Activated CD4-positive, alpha-beta T cell treated with anti-CD3 and anti-CD28 coated beads for 36 hours (primary cell): ENCODE measurements at regions of chr5 and their contacts with region 1.

Region 1: DNA sequence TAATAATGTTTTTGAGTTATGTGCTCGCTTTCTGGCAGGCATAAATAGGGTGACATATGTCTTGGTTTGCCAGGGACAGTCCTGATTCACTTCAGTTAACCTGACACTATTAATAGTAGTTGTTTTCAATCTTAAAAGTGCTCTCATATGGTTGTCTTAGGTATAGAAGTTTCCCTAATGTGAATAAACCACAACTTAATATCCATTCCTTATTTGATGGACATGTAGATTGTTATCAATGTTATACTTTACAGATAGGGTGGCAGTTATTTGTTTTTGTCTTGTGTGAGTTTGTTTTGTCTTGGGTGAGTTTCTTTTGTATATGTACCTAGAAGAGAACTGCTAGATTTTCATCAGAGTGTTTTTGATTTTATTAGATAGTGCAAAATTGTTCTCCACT is 7.9 kb downstream of the G3BP1 start:
- DNase-seq: no peak
- ATAC-seq: peak; percentile 21
- H3K4me3 Mint-ChIP-seq: no peak overlapping the region
- H3K27ac Mint-ChIP-seq: peak overlapping the region; percentile 12
- H3K4me1 Mint-ChIP-seq: peaks cover 83% of the 10 kb centered on the region
- H3K27me3 Mint-ChIP-seq: no peaks in the 10 kb centered on the region

Region 2: GRCh38 chr5:151805414-151806223 is 26.0 kb after region 1 on chr5:
- CTCF ChIA-PET with region 1: no interaction called
- POLR2A ChIA-PET with region 1: no interaction called
- intact Hi-C with region 1: loop called in 1 of 2 experiments (anchors 2 kb)
- DNase-seq: no peak
- ATAC-seq: no peak
- H3K4me3 Mint-ChIP-seq: no peak overlapping the region
- H3K27ac Mint-ChIP-seq: no peak overlapping the region
- H3K4me1 Mint-ChIP-seq: peaks cover 39% of the 10 kb centered on the region
- H3K27me3 Mint-ChIP-seq: no peaks in the 10 kb centered on the region